PC-9 (cell line): ENCODE measurements at regions of chr12 and their contacts with region 1.

Region 1: DNA sequence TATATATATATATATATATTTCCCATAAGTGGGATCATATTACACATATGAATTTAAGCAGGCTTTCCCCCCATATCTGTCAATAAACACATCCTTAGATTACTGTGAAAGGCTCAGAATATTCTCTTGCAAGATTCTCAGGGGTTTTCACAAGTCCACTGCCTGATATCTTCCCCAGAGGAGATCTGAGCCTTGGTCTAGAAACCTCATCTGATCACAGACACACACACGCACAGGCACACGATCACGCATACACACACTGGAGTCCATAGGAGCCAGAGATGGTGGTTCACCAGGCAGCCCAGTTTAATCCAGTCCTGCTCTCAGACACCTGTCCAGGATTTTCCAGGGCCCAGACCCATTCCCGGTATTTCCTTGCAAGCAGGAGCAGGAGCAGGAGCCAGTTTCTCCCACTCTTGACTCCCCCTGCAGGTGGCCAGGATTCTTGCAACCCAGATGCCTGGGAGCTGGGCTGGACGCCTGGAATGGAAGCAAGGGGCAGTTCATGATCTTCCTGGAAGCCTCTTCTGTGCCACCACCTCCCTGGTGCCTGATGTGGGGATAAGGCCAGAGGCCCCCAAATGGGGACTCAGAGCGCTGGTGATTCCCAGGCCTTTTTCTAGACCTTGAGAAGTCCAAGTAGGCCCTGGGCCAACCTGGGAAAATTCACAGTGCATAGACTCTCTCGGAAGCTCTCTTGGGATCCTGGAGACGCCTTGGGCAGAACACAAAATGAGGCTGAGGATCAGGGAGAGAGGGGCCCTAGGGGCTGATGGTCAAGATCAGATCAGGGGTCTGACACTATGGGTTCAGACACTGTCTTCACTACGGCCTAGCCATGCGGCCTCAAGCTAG is 16.5 kb upstream of the KRT78 start:
- DNase-seq: peak; percentile 64 to 70
- H3K4me3 ChIP-seq: no peak overlapping the region
- H3K27ac ChIP-seq: no peak overlapping the region
- H3K4me1 ChIP-seq: peaks cover 30% of the 10 kb centered on the region
- H3K27me3 ChIP-seq: no peaks in the 10 kb centered on the region
- CTCF ChIP-seq: peak; percentile 93

Region 2: GRCh38 chr12:52741392-52742195 is 123.7 kb before region 1 on chr12:
- CTCF ChIA-PET with region 1: no interaction called
- POLR2A ChIA-PET with region 1: no interaction called
- intact Hi-C with region 1: loop called (anchors 5 kb)
- DNase-seq: peak; percentile 53 to 69
- H3K4me3 ChIP-seq: no peak overlapping the region
- H3K27ac ChIP-seq: no peak overlapping the region
- H3K4me1 ChIP-seq: no peaks in the 10 kb centered on the region
- H3K27me3 ChIP-seq: no peaks in the 10 kb centered on the region
- CTCF ChIP-seq: no peak

Region 3: GRCh38 chr12:52965333-52965724 is 100.0 kb after region 1 on chr12:
- CTCF ChIA-PET with region 1: no interaction called
- POLR2A ChIA-PET with region 1: no interaction called
- intact Hi-C with region 1: no loop called
- DNase-seq: no peak
- H3K4me3 ChIP-seq: peak overlapping the region; percentile 54; the same call in 1 of the 2 replicates
- H3K27ac ChIP-seq: peak overlapping the region; percentile 68
- H3K4me1 ChIP-seq: peaks cover 28% of the 10 kb centered on the region
- H3K27me3 ChIP-seq: no peaks in the 10 kb centered on the region
- CTCF ChIP-seq: no peak

Region 4: GRCh38 chr12:53596920-53597363 is 731.6 kb after region 1 on chr12:
- CTCF ChIA-PET with region 1: no interaction called
- POLR2A ChIA-PET with region 1: no interaction called
- intact Hi-C with region 1: no loop called
- DNase-seq: no peak
- H3K4me3 ChIP-seq: no peak overlapping the region
- H3K27ac ChIP-seq: no peak overlapping the region
- H3K4me1 ChIP-seq: no peaks in the 10 kb centered on the region
- H3K27me3 ChIP-seq: no peaks in the 10 kb centered on the region
- CTCF ChIP-seq: no peak